Activated T-helper 2 cell treated with anti-CD3 and anti-CD28 coated beads, Interferon-gamma antibody, Interleukin-2, Interleukin-4, amounts not matched to agents 10 μg/mL and 5 μg/mL and 100 μg/mL, durations not matched to agents 14 hours and 24 hours and 36 hours (primary cell): ENCODE measurements at regions of chr10 and their contacts with region 1.

Region 1: GRCh38 chr10:28663576-28664313 is 13.6 kb upstream of the BAMBI start:
- DNase-seq: peak; percentile 46
- H3K4me3 Mint-ChIP-seq: no peak overlapping the region
- H3K27ac Mint-ChIP-seq: no peak overlapping the region
- H3K4me1 Mint-ChIP-seq: peaks cover 7% of the 10 kb centered on the region
- H3K27me3 Mint-ChIP-seq: peaks cover 46% of the 10 kb centered on the region

Region 2: GRCh38 chr10:28676968-28677887 is 13.5 kb after region 1 on chr10 and contains the start of gene BAMBI:
- intact Hi-C with region 1: loop called (anchors 1 kb)
- DNase-seq: peak; percentile 88
- H3K4me3 Mint-ChIP-seq: peak within 1 kb of the TSS; percentile 74
- H3K27ac Mint-ChIP-seq: no peak within 1 kb of the TSS
- H3K4me1 Mint-ChIP-seq: peaks cover 26% of the 10 kb centered on the region
- H3K27me3 Mint-ChIP-seq: peaks cover 73% of the 10 kb centered on the region
- total RNA-seq, gene BAMBI: 0.16 TPM in 2 replicates

Region 3: GRCh38 chr10:28991326-28992270 is 327.9 kb after region 1 on chr10:
- intact Hi-C with region 1: loop called (anchors 1 kb)
- DNase-seq: no peak
- H3K4me3 Mint-ChIP-seq: no peak overlapping the region
- H3K27ac Mint-ChIP-seq: no peak overlapping the region
- H3K4me1 Mint-ChIP-seq: no peaks in the 10 kb centered on the region
- H3K27me3 Mint-ChIP-seq: no peaks in the 10 kb centered on the region

Region 4: DNA sequence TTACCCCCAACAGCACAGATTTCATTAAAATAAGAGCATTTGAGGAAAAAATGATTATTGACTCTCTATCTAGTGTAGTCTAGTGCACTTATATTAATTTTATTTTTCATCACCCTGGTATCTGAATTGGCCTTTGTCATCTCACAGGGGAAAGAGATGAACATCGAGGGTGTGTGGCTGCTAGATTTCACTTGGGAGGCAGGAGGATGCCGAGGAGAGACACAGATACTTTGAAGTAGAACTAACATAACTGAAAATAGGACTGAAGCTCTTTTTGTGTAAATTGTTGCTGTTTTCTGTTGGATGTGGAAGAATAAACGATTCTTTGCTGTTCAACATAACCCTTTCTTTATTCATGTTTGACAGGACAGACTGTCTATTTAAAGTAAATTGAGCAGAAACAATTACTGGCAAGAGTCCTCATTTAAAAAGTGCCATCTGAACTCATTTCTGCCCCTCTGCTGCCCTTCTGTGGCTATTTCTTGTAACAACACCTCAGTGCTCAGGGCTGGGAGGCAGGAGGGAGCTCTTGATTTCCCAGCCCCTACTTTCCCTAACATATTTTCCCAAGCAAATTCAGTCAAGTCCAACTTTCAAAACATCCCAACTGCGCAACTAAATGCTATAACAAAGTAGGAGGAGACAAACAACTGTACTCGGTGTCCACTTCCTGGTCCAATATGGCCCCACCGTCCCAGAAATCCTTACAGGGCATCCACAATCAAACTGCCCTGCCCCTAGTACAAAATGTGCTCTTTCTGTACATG is 640.7 kb after region 1 on chr10:
- intact Hi-C with region 1: loop called (anchors 5 kb)
- DNase-seq: no peak
- H3K4me3 Mint-ChIP-seq: no peak overlapping the region
- H3K27ac Mint-ChIP-seq: no peak overlapping the region
- H3K4me1 Mint-ChIP-seq: no peaks in the 10 kb centered on the region
- H3K27me3 Mint-ChIP-seq: peaks cover 10% of the 10 kb centered on the region